MCF 10A (cell line): ENCODE measurements at regions of chr1 and their contacts with region 1.

Region 1: DNA sequence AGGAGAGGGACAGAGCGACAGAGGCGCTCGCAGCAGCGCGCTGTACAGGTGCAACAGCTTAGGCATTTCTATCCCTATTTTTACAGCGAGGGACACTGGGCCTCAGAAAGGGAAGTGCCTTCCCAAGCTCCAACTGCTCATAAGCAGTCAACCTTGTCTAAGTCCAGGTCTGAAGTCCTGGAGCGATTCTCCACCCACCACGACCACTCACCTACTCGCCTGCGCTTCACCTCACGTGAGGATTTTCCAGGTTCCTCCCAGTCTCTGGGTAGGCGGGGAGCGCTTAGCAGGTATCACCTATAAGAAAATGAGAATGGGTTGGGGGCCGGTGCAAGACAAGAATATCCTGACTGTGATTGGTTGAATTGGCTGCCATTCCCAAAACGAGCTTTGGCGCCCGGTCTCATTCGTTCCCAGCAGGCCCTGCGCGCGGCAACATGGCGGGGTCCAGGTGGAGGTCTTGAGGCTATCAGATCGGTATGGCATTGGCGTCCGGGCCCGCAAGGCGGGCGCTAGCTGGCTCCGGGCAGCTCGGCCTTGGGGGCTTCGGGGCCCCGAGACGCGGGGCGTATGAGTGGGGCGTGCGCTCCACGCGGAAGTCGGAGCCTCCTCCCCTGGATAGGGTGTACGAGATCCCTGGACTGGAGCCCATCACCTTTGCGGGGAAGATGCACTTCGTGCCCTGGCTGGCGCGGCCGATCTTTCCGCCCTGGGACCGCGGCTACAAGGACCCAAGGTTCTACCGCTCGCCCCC is at the starts of genes CYB5RL and MRPL37:
- DNase-seq: peak; percentile 98
- H3K4me3 Mint-ChIP-seq: peak within 1 kb of the TSS; percentile 93
- H3K27ac Mint-ChIP-seq: peak within 1 kb of the TSS; percentile 95
- H3K4me1 Mint-ChIP-seq: peaks cover 22% of the 10 kb centered on the region
- H3K27me3 Mint-ChIP-seq: no peaks in the 10 kb centered on the region
- CTCF ChIP-seq: no peak
- total RNA-seq, gene CYB5RL: 4.6 and 5.4 TPM in 2 replicates
- total RNA-seq, gene MRPL37: 98.2 and 128 TPM in 2 replicates

Region 2: GRCh38 chr1:54121482-54122134 is 78.3 kb before region 1 on chr1:
- CTCF ChIA-PET with region 1: interaction called, 3 read pairs
- POLR2A ChIA-PET with region 1: interaction called, 7 read pairs
- intact Hi-C with region 1: loop called (anchors 5 kb)
- DNase-seq: peak; percentile 65
- H3K4me3 Mint-ChIP-seq: no peak overlapping the region
- H3K27ac Mint-ChIP-seq: no peak overlapping the region
- H3K4me1 Mint-ChIP-seq: no peaks in the 10 kb centered on the region
- H3K27me3 Mint-ChIP-seq: no peaks in the 10 kb centered on the region
- CTCF ChIP-seq: peak; percentile 58

Region 3: GRCh38 chr1:54218883-54219687 is 19.1 kb after region 1 on chr1:
- CTCF ChIA-PET with region 1: interaction called, 3 read pairs
- POLR2A ChIA-PET with region 1: interaction called, 14 read pairs
- intact Hi-C with region 1: no loop called
- DNase-seq: no peak
- H3K4me3 Mint-ChIP-seq: no peak overlapping the region
- H3K27ac Mint-ChIP-seq: peak overlapping the region; percentile 35
- H3K4me1 Mint-ChIP-seq: no peaks in the 10 kb centered on the region
- H3K27me3 Mint-ChIP-seq: no peaks in the 10 kb centered on the region
- CTCF ChIP-seq: no peak

Region 4: DNA sequence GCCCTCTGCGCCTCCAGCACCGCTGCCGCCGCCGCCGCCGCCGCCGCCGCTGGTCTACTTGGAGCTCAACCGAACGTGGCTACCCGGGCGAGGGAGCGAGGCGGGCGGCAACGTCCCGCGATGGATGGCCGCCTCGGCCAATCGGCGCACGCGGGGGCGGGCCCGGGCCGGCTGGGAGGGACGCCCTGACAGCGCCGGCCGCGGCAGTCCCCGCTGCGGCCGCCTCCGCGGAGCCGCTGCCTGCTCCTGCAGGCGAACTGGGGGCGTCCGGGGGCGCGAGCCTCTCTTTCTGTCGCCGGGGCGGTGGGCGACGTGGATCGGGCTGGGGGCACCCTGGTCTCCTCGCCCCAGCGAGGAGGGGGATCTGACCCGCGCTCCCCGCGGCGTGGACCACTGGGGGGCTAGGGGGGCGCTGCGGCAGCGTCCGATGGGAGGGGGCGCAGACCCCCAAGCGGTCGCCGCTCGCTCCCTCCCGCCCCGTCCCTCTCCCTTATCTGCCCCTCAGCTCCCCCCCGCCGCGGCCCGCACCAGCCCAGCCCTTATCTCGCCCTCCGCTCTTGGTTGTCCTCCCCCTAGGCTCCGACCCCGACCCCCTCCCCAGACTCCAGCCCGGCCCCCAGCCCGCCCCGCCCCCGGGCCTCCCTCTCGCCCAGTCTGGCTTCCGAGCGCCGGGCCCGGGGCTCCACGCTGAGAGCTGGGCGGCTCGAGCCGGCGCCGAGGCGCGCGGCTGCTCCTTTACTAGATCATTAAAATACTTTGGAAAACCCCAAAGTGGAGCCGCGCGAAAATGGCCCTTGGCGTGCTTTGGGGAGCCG is 206.6 kb after region 1 on chr1 and contains the start of gene SSBP3:
- CTCF ChIA-PET with region 1: interaction called, 6 read pairs
- POLR2A ChIA-PET with region 1: interaction called, 17 read pairs
- intact Hi-C with region 1: no loop called
- DNase-seq: peak; percentile 91
- H3K4me3 Mint-ChIP-seq: peak within 1 kb of the TSS; percentile 83
- H3K27ac Mint-ChIP-seq: peak within 1 kb of the TSS; percentile 96
- H3K4me1 Mint-ChIP-seq: peaks cover 28% of the 10 kb centered on the region
- H3K27me3 Mint-ChIP-seq: no peaks in the 10 kb centered on the region
- CTCF ChIP-seq: no peak
- total RNA-seq, gene SSBP3: 6.5 and 8.6 TPM in 2 replicates